Heart right ventricle (tissue), 16 donors: ENCODE measurements at regions of chr17 and their contacts with region 1.

Region 1: GRCh38 chr17:18260332-18261144 is at the start of gene MIEF2:
- DNase-seq: peak; percentile 94 to 97
- ATAC-seq: peak; percentile 80 to 90 (median 88)
- H3K4me3 ChIP-seq: peak within 1 kb of the TSS; percentile 59 to 96 (median 86)
- H3K27ac ChIP-seq: peak within 1 kb of the TSS; percentile 90 to 99 (median 96)
- H3K4me1 ChIP-seq: peaks cover 21 to 65% (median 56%) of the 10 kb centered on the region in 9 donors
- H3K27me3 ChIP-seq: no peaks in the 10 kb centered on the region
- CTCF ChIP-seq: no peak
- total RNA-seq, gene MIEF2: 23.9 to 43.4 (median 33.5) TPM

Region 2: DNA sequence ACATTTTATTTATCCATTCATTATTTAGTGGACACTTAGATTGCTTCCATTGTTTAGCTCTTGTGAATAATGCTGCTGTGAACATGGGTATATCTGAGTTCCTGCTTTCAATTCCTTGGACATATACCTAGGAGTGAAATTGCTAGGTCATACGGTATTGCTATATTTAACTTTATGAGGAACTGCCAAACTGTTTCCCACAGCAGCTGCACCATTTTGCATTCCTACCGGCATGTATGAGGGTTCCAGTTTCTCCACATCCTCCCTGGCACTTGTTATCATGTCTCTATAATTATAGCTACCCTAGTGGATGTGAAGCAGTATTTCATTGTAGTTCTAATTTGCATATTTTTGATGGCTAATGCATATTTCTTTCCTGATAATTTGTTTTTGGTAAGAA is 196.5 kb before region 1 on chr17:
- intact Hi-C with region 1: no loop called
- DNase-seq: no peak
- ATAC-seq: peak in 2 of 8 donors; percentile 60 to 67
- H3K4me3 ChIP-seq: no peak overlapping the region
- H3K27ac ChIP-seq: no peak overlapping the region
- H3K4me1 ChIP-seq: no peaks in the 10 kb centered on the region
- H3K27me3 ChIP-seq: no peaks in the 10 kb centered on the region
- CTCF ChIP-seq: no peak

Region 3: GRCh38 chr17:18217412-18218015 is 43.0 kb before region 1 on chr17:
- intact Hi-C with region 1: loop called in 3 of 10 experiments (anchors 5 kb)
- DNase-seq: peak; percentile 73 to 79
- ATAC-seq: peak; percentile 75 to 89 (median 86)
- H3K4me3 ChIP-seq: no peak overlapping the region
- H3K27ac ChIP-seq: no peak overlapping the region
- H3K4me1 ChIP-seq: peaks cover 0 to 18% (median 5%) of the 10 kb centered on the region in 9 donors
- H3K27me3 ChIP-seq: no peaks in the 10 kb centered on the region
- CTCF ChIP-seq: peak; percentile 81 to 94 (median 91)

Region 4: DNA sequence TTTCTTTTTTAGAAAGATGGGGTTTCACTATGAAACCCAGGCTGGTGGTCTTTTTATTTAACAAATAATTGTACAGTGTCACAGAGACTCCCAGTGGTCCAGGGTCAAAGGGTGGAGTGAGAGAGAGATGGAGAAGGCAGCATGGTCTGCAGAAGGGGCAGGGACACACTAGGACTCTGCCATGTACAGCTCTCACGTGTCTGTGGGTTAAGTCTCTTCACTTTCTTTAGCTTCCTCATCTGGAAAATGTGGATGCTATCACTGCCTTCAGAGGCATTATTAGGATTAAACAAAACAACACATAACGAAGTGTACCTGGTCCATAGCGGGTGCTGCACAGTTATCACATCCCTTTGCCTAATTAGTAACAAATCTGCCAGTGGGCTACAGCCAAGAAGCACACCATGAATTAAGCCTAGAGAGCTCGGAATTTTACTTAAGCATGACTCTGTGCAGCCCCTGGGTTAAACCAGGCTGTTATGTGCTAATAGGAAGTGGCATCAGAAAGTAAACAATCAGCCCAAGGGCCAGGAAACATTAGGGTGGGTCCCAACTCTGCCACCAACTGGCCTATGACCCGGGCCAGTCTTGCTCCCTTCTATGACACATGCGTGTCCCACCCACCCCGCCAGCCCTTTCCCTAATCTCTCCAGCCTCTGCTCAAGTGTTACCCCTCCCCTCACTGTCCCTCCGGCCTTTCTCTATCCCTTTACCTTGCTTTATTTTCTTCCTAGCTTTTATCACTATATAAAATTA is 40.4 kb after region 1 on chr17:
- intact Hi-C with region 1: no loop called
- DNase-seq: no peak
- ATAC-seq: peak in 3 of 8 donors; percentile 27 to 35 (median 29)
- H3K4me3 ChIP-seq: no peak overlapping the region
- H3K27ac ChIP-seq: peak overlapping the region in 1 of 10 donors; percentile 64
- H3K4me1 ChIP-seq: peaks cover 0 to 19% (median 0%) of the 10 kb centered on the region in 9 donors
- H3K27me3 ChIP-seq: no peaks in the 10 kb centered on the region
- CTCF ChIP-seq: no peak